PC-3 (cell line): ENCODE measurements at regions of chr1 and their contacts with region 1.

Region 1: GRCh38 chr1:3530926-3531818 is 76.7 kb downstream of the ARHGEF16 start:
- DNase-seq: peak; percentile 93
- ATAC-seq: peak; percentile 76
- H3K4me3 ChIP-seq: peak overlapping the region; percentile 98
- H3K27ac ChIP-seq: peak overlapping the region; percentile 19; the same call in 1 of the 2 replicates
- H3K4me1 ChIP-seq: peaks cover 16% of the 10 kb centered on the region
- H3K27me3 ChIP-seq: no peaks in the 10 kb centered on the region
- CTCF ChIP-seq: no peak

Region 2: GRCh38 chr1:3249631-3250501 is 281.3 kb before region 1 on chr1:
- CTCF ChIA-PET with region 1: no interaction called
- POLR2A ChIA-PET with region 1: no interaction called
- intact Hi-C with region 1: no loop called
- DNase-seq: no peak
- ATAC-seq: no peak
- H3K4me3 ChIP-seq: no peak overlapping the region
- H3K27ac ChIP-seq: no peak overlapping the region
- H3K4me1 ChIP-seq: 0 out of 2 replicates have a peak, but pooled peaks cover 5% of the 10 kb centered on the region
- H3K27me3 ChIP-seq: peaks cover 79% of the 10 kb centered on the region
- CTCF ChIP-seq: no peak

Region 3: DNA sequence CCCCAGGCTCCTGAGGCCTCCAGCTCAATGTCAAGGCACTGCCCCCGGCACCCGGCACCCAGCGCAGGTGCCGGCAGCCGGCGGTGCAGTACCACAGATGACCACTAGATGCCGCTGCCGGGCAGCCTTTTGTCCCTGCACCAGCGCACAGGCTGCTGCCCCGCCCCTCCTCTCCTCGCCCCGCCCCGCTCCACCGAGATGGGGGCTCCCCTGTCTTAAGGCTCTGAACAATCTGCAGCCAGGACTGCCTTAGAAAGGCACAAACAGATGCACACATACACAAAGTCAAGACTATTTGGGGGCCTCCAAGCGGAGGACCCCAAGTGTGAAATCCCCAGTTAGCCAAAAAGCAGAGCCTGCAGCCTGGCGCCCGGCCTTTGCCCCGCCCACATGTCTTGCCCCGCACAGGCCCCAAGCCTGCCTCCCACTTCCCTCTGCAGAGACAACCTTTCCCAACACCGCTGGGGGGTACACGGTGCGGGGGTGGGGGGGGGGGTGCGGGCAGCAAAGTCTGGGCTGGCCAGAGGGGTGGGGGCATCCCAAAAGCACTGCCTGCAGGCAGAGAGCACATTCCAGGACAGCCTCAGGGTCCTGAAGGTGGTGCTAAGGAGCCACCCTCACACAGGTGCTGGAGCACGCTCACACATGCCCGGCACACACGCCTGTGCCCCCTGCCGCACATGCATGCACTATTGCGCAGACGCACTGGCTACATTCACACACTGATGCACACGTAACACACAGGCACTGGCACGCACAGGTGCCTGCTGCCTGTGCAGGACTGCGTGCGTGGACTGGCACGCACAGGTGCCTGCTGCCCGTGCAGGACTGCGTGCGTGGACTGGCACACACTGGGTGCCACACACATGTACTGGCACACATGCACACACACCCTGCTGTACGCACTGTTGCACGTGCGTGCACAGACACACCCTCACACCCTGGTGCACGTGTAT is 39.6 kb before region 1 on chr1:
- CTCF ChIA-PET with region 1: no interaction called
- POLR2A ChIA-PET with region 1: no interaction called
- intact Hi-C with region 1: loop called (anchors 1 kb)
- DNase-seq: peak; percentile 90
- ATAC-seq: peak; percentile 61
- H3K4me3 ChIP-seq: peak overlapping the region; percentile 33; the same call in 1 of the 2 replicates
- H3K27ac ChIP-seq: no peak overlapping the region
- H3K4me1 ChIP-seq: peaks cover 27% of the 10 kb centered on the region
- H3K27me3 ChIP-seq: no peaks in the 10 kb centered on the region
- CTCF ChIP-seq: peak; percentile 98

Region 4: DNA sequence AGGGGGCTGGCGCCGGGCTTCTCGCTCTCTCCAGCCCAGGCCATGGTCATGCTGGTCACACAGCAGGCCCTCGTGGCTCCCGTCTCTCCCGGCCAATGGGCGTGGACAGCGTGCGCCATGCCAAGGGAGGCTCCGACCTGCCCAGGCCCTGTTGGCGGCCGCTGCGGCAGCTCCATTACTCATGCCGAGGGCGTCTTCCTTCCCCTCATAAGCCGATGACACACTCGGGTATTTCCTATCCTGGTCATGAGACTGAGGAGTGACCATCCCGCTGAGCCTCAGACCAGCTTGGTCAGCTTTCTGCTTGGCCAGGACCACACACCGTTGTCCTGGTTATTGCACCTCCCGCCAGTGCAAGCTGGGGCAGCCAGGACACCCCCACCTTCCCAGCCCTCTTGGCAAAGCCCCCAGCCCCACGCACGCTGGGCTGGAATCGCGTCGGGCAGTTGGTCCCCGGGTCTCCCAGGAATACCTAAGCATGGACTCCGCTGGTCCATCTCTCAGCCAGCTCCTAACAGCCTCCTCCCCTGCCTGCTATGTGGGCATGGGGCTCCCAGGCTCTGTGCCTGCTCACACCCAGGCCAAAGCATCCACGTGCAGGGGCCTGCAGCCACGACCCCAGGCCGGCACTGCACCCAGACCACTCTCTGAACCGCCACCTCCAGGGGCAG is 26.9 kb before region 1 on chr1:
- CTCF ChIA-PET with region 1: no interaction called
- POLR2A ChIA-PET with region 1: interaction called, 12 read pairs
- intact Hi-C with region 1: loop called (anchors 1 kb)
- DNase-seq: peak; percentile 97
- ATAC-seq: peak; percentile 95
- H3K4me3 ChIP-seq: no peak overlapping the region
- H3K27ac ChIP-seq: peak overlapping the region; percentile 70
- H3K4me1 ChIP-seq: peaks cover 14% of the 10 kb centered on the region
- H3K27me3 ChIP-seq: no peaks in the 10 kb centered on the region
- CTCF ChIP-seq: no peak

Region 5: GRCh38 chr1:3564921-3565827 is 34.0 kb after region 1 on chr1:
- CTCF ChIA-PET with region 1: no interaction called
- POLR2A ChIA-PET with region 1: no interaction called
- intact Hi-C with region 1: loop called (anchors 1 kb)
- DNase-seq: peak; percentile 44
- ATAC-seq: peak; percentile 63
- H3K4me3 ChIP-seq: no peak overlapping the region
- H3K27ac ChIP-seq: no peak overlapping the region
- H3K4me1 ChIP-seq: no peaks in the 10 kb centered on the region
- H3K27me3 ChIP-seq: no peaks in the 10 kb centered on the region
- CTCF ChIP-seq: peak; percentile 100